ENCODE measurements at regions of chrX and their contacts with region 1.

Region 1: DNA sequence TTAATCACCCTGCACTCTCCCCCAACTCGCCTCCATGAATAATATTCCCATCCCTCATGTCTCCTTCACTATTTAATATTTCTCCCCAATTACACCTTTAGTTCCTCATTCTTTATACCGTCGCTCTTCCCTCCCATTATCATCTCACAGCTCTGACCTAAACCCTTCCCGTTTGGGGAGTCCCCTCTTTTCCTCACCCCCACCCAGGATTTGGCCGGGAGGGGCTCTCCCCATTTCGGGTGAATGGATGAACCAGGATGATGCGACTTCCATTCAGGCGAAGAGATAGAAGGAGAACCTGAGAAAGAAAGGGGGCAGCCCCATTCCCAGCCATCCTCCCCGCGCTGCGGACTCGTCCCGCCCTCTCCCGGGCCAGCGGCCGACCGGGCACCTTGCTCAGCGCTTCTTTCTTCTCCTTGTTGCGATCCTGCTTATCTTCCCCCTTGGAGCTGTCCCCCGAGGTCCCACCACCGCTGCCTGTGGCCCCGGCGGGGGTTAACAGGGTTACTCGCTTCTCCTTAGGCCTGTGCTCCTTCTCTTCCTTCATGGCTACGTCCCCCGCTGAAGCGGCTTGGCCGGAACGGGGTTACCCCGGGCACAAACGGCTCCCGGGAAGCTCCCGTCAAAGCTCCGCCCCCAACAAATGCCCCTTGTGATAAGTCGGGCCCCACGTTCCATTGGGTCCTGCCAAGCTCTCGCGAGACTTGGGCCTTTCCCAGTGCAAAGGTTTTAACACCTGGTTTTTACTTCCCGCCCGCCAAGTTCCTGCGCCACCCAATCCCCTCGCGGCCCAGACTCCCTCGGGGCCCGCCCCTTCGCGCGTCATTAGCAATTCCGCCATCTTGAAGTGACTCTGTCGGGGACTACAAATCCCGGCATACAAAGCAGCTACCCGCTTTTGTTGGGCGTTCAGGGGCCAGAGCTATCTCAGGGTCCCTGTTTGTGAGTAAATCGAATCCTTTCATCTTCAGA is at the start of gene UPF3B:
- DNase-seq: peak; percentile 93
- H3K4me3 ChIP-seq: peak within 1 kb of the TSS; percentile 67
- H3K27me3 ChIP-seq: no peaks in the 10 kb centered on the region
- CTCF ChIP-seq: 0 out of 2 replicates have a peak, but pooled peaks have one; percentile 9
- polyA plus RNA-seq, gene UPF3B: 3.0 and 5.5 TPM in 2 replicates

Region 2: GRCh38 chrX:119791438-119792231 is 61.0 kb before region 1 on chrX and contains the start of gene RPL39:
- CTCF ChIA-PET with region 1: no interaction called
- POLR2A ChIA-PET with region 1: interaction called, 11 read pairs
- DNase-seq: peak; percentile 32
- H3K4me3 ChIP-seq: peak within 1 kb of the TSS; percentile 73
- H3K27me3 ChIP-seq: no peaks in the 10 kb centered on the region
- CTCF ChIP-seq: no peak
- polyA plus RNA-seq, gene RPL39: 935 and 2,139 TPM in 2 replicates

Region 3: GRCh38 chrX:120274958-120275357 is 422.3 kb after region 1 on chrX:
- CTCF ChIA-PET with region 1: no interaction called
- POLR2A ChIA-PET with region 1: no interaction called
- DNase-seq: no peak
- H3K4me3 ChIP-seq: no peak overlapping the region
- H3K27me3 ChIP-seq: no peaks in the 10 kb centered on the region
- CTCF ChIP-seq: no peak

Measured in BJ (cell line).